Activated CD4-positive, alpha-beta T cell treated with anti-CD3 and anti-CD28 coated beads, Interleukin-2, amount 10 ng/mL, durations not matched to agents 7 days and 5 days (primary cell): ENCODE measurements at regions of chr2 and their contacts with region 1.

Region 1: DNA sequence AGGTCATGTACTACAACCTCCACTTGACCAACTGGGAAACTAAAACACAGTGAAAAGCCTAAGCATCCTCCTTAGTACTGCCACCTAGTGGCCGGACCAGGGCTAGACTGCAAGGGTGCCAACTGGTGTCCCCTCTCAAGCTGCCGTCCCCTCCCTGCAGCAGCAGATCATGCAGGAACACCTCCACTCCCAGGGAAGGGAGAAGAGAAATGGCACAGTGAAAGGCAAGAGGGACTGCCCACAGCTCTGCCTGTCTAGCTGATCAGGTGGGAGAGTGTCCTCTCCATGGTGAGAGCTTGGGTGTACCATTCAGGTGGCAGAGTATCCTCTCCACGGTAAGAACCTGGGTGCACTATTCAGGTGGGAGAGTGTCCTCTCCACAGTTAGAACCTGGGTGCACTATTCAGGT is 78.1 kb downstream of the AAK1 start:
- DNase-seq: peak; percentile 74
- H3K4me3 Mint-ChIP-seq: no peak overlapping the region
- H3K27ac Mint-ChIP-seq: no peak overlapping the region
- H3K4me1 Mint-ChIP-seq: peaks cover 65% of the 10 kb centered on the region
- H3K27me3 Mint-ChIP-seq: no peaks in the 10 kb centered on the region

Region 2: GRCh38 chr2:69553991-69554390 is 11.4 kb before region 1 on chr2:
- CTCF ChIA-PET with region 1: interaction called, 10 read pairs
- POLR2A ChIA-PET with region 1: no interaction called
- DNase-seq: no peak
- H3K4me3 Mint-ChIP-seq: no peak overlapping the region
- H3K27ac Mint-ChIP-seq: peak overlapping the region; percentile 19
- H3K4me1 Mint-ChIP-seq: peaks cover 30% of the 10 kb centered on the region
- H3K27me3 Mint-ChIP-seq: no peaks in the 10 kb centered on the region

Region 3: GRCh38 chr2:69581774-69582581 is 16.5 kb after region 1 on chr2:
- CTCF ChIA-PET with region 1: interaction called, 20 read pairs
- POLR2A ChIA-PET with region 1: interaction called, 3 read pairs
- DNase-seq: no peak
- H3K4me3 Mint-ChIP-seq: peak overlapping the region; percentile 49
- H3K27ac Mint-ChIP-seq: peak overlapping the region; percentile 77
- H3K4me1 Mint-ChIP-seq: peaks cover 75% of the 10 kb centered on the region
- H3K27me3 Mint-ChIP-seq: no peaks in the 10 kb centered on the region